Activated naive CD4-positive, alpha-beta T cell treated with anti-CD3 and anti-CD28 coated beads for 36 hours (primary cell): ENCODE measurements at regions of chr9 and their contacts with region 1.

Region 1: DNA sequence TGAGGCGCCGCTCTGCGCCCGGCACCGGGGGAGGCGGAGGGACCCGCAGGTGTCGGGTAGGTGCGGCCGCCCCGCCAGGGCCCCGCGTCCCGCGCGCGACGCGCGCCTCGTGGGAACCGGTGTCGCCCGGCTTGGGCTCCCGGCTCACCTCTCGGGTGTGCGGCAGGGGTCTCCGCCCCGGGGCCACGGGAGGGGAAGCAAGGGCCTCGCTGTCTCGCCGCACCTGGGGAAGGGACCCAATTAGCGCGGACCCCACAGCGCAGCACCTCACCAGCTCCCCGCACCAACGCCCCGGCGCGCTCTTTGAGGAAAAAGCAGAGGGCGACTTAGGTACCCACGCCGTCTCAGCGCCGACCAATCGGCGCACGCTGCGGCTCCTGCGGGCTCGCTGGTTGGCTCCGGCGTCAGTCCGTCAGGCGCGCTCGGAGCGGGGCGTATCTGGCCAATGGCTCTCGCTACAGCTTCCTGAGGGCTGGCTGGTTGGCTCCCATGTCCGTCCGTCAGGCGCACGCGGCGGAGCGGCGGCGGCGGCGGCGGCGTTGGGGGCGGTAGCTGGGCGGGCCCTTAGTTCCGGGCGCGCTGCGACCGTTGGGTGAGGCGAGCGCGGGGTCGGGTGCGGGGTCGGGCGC is at the start of gene TRAF2:
- DNase-seq: peak; percentile 98
- H3K4me3 Mint-ChIP-seq: peak within 1 kb of the TSS; percentile 98
- H3K27ac Mint-ChIP-seq: peak within 1 kb of the TSS; percentile 89
- H3K4me1 Mint-ChIP-seq: peaks cover 59% of the 10 kb centered on the region
- H3K27me3 Mint-ChIP-seq: no peaks in the 10 kb centered on the region
- total RNA-seq, gene TRAF2: 39.7 to 41.8 TPM

Region 2: GRCh38 chr9:136400038-136400834 is 485.8 kb before region 1 on chr9 and contains the start of gene SNAPC4:
- CTCF ChIA-PET with region 1: interaction called, 3 read pairs
- intact Hi-C with region 1: loop called (anchors 5 kb)
- DNase-seq: peak; percentile 85
- H3K4me3 Mint-ChIP-seq: peak within 1 kb of the TSS; percentile 78
- H3K27ac Mint-ChIP-seq: peak within 1 kb of the TSS; percentile 59
- H3K4me1 Mint-ChIP-seq: peaks cover 57% of the 10 kb centered on the region
- H3K27me3 Mint-ChIP-seq: no peaks in the 10 kb centered on the region
- total RNA-seq, gene SNAPC4: 12.3 to 14.1 TPM

Region 3: DNA sequence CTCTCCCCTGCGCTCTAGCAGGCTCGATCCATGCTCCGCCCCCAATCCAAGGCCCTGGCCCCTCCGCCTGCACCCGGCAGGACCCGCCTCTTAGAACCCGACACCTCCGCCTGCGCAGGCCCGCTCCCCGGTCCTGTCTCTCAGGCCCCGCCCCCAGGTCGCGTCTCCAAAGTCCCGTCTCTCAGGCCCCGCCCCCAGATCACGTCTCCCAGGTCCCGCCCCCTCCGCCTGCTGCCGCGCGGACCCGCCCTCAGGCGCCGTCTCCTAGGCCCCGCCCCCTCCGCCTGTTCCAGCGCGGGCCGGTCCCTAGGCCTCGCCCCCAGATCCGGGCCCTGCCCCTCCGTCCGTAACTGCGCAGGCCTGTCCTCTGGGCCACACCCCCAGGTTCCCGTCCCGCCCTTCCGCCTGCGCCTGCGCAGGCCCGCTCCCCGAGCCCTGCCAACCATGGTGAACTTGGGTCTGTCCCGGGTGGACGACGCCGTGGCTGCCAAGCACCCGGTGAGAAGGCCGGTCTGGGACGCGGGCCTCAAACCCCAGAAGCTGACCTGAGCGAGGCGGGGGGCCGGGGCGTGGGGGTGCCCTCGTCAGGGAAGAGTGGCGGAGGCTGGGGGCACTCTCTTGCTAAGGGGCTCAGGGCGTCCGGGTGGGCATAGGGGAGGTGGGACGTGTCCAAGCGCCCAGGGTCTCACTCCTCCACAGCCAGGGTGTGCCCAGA is 95.0 kb before region 1 on chr9 and contains the start of gene TMEM141:
- CTCF ChIA-PET with region 1: interaction called, 3 read pairs
- intact Hi-C with region 1: loop called (anchors 1 kb)
- DNase-seq: peak; percentile 100
- H3K4me3 Mint-ChIP-seq: peak within 1 kb of the TSS; percentile 83
- H3K27ac Mint-ChIP-seq: peak within 1 kb of the TSS; percentile 79
- H3K4me1 Mint-ChIP-seq: peaks cover 19% of the 10 kb centered on the region
- H3K27me3 Mint-ChIP-seq: no peaks in the 10 kb centered on the region
- total RNA-seq, gene TMEM141: 38.1 to 39.6 TPM

Region 4: GRCh38 chr9:136849038-136849959 is 36.8 kb before region 1 on chr9 and contains the start of gene PHPT1:
- CTCF ChIA-PET with region 1: interaction called, 5 read pairs
- intact Hi-C with region 1: loop called (anchors 1 kb)
- DNase-seq: peak; percentile 99
- H3K4me3 Mint-ChIP-seq: peak within 1 kb of the TSS; percentile 93
- H3K27ac Mint-ChIP-seq: peak within 1 kb of the TSS; percentile 95
- H3K4me1 Mint-ChIP-seq: peaks cover 14% of the 10 kb centered on the region
- H3K27me3 Mint-ChIP-seq: peaks cover 18% of the 10 kb centered on the region
- total RNA-seq, gene PHPT1: 110 to 116 TPM

Region 5: GRCh38 chr9:136902259-136902821 is 16.3 kb after region 1 on chr9:
- CTCF ChIA-PET with region 1: interaction called, 4 read pairs
- intact Hi-C with region 1: loop called (anchors 1 kb)
- DNase-seq: peak; percentile 95
- H3K4me3 Mint-ChIP-seq: peak overlapping the region; percentile 31
- H3K27ac Mint-ChIP-seq: peak overlapping the region; percentile 94
- H3K4me1 Mint-ChIP-seq: peaks cover 52% of the 10 kb centered on the region
- H3K27me3 Mint-ChIP-seq: no peaks in the 10 kb centered on the region

Region 6: GRCh38 chr9:136991993-136992818 is 106.1 kb after region 1 on chr9 and contains the start of gene PAXX:
- CTCF ChIA-PET with region 1: no interaction called
- intact Hi-C with region 1: loop called (anchors 1 kb)
- DNase-seq: peak; percentile 95
- H3K4me3 Mint-ChIP-seq: peak within 1 kb of the TSS; percentile 83
- H3K27ac Mint-ChIP-seq: peak within 1 kb of the TSS; percentile 81
- H3K4me1 Mint-ChIP-seq: peaks cover 16% of the 10 kb centered on the region
- H3K27me3 Mint-ChIP-seq: peaks cover under 1% of the 10 kb centered on the region
- total RNA-seq, gene PAXX: 75.9 to 76.8 TPM

Region 7: DNA sequence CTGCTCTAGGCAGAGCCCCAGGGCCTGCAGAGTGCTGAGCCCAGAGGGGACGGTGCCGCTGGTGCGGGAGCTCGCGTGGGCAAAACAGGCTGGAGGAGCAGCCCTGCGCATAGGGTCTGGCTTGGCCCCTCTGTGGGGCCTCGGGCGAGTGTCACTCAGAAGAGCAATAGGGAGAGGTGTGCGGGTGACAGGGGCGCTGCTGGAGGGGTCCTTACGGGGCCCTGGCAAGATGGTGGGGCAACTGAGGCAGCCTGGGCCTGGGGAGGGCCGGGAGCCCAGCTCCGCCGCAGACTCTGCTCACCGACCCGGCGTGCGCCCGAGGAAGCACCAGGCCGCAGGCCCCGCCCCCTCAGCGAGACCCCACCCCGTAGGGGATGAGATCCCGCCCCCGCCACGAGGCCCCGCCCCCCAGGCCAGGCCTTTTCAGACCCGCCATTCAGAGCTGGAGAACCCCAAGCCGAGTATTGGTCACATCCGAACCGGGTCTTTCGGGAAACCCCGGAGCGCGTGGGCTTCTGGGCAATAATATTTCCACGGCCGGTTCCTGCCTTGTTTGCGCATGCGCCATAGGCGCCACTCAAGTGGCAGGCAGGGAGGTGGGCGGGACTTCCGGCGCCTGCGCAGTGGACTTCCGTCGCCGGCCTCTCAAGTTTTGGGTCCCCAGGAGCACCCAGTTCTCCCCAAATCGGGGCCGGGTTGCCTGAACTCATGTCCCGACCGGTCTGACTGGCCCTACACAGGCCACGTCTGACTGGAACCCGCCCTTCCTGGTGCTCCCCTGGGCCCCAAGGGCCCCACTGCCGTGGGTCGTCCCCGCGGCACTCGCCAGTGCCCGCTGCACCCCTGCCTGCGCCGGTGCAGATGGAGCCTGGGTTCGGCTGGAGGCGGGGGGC is 337.3 kb after region 1 on chr9:
- CTCF ChIA-PET with region 1: no interaction called
- intact Hi-C with region 1: loop called (anchors 10 kb)
- DNase-seq: peak; percentile 99
- H3K4me3 Mint-ChIP-seq: peak overlapping the region; percentile 85
- H3K27ac Mint-ChIP-seq: no peak overlapping the region
- H3K4me1 Mint-ChIP-seq: peaks cover 8% of the 10 kb centered on the region
- H3K27me3 Mint-ChIP-seq: peaks cover 2% of the 10 kb centered on the region

Region 8: GRCh38 chr9:137892424-137893191 is 1006.5 kb after region 1 on chr9:
- CTCF ChIA-PET with region 1: no interaction called
- intact Hi-C with region 1: no loop called
- DNase-seq: no peak
- H3K4me3 Mint-ChIP-seq: no peak overlapping the region
- H3K27ac Mint-ChIP-seq: no peak overlapping the region
- H3K4me1 Mint-ChIP-seq: no peaks in the 10 kb centered on the region
- H3K27me3 Mint-ChIP-seq: no peaks in the 10 kb centered on the region